Activated naive CD4-positive, alpha-beta T cell treated with anti-CD3 and anti-CD28 coated beads for 36 hours (primary cell): ENCODE measurements at regions of chr1 and their contacts with region 1.

Region 1: GRCh38 chr1:154878371-154879022 is 8.4 kb upstream of the KCNN3 start:
- DNase-seq: peak; percentile 84
- H3K4me3 Mint-ChIP-seq: no peak overlapping the region
- H3K27ac Mint-ChIP-seq: no peak overlapping the region
- H3K4me1 Mint-ChIP-seq: peaks cover 10% of the 10 kb centered on the region
- H3K27me3 Mint-ChIP-seq: no peaks in the 10 kb centered on the region

Region 2: GRCh38 chr1:154669464-154670282 is 208.8 kb before region 1 on chr1:
- CTCF ChIA-PET with region 1: interaction called, 19 read pairs
- intact Hi-C with region 1: loop called (anchors 1 kb)
- DNase-seq: peak; percentile 90
- H3K4me3 Mint-ChIP-seq: no peak overlapping the region
- H3K27ac Mint-ChIP-seq: no peak overlapping the region
- H3K4me1 Mint-ChIP-seq: peaks cover 34% of the 10 kb centered on the region
- H3K27me3 Mint-ChIP-seq: no peaks in the 10 kb centered on the region

Region 3: DNA sequence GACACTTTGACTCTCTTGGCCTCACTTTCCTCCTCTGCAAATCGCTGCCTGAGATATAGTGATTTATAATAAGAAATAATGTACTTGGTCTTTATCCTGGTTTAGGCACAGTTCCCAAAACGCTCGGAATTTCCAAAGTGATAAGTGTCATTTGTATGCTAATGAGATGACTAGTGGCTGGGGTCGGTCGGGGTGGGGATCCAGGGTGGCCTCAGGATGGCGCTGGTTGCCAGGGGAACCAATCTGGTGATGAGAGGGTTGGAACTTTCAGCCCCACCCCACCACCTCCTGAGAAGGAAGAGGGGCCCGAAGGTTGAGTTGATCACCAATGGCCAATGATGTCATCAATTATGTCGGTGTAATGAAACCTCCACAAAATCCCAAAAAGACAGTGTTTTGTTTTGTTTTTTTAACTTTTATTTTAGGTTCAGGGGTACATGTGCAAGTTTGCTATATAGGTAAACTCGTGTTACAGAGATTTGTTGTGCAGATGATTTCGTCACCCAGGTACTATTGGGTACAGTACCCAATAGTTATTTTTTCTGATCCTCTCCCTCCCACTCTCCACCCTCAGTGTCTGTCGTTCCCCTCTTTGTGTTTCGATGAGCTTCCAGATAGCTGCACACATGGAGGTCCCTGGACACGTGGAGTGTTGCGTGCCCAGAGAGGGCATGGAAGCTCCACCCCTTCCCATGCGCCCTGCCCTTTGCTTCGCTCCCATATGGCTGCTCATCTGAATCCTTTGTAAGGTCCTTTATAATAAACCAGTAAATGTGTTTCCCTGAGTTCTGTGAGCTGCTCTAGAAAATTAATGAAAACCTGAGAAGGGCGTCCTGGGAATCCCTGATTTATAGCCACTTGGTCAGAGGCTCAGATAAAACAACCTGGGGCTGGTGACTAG is 105.6 kb before region 1 on chr1:
- CTCF ChIA-PET with region 1: interaction called, 6 read pairs
- intact Hi-C with region 1: loop called (anchors 1 kb)
- DNase-seq: peak; percentile 70
- H3K4me3 Mint-ChIP-seq: no peak overlapping the region
- H3K27ac Mint-ChIP-seq: no peak overlapping the region
- H3K4me1 Mint-ChIP-seq: peaks cover 18% of the 10 kb centered on the region
- H3K27me3 Mint-ChIP-seq: no peaks in the 10 kb centered on the region